Vagina (tissue), 2 donors: ENCODE measurements at regions of chr9 and their contacts with region 1.

Region 1: GRCh38 chr9:70413798-70414775 is at the start of gene KLF9:
- DNase-seq: peak; percentile 99 to 100
- H3K4me3 ChIP-seq: peak within 1 kb of the TSS; percentile 65 to 91
- H3K27ac ChIP-seq: peak within 1 kb of the TSS; percentile 100
- H3K4me1 ChIP-seq: peaks cover 57% of the 10 kb centered on the region
- H3K27me3 ChIP-seq: no peaks in the 10 kb centered on the region
- CTCF ChIP-seq: no peak
- POLR2A ChIP-seq: peak in 1 of 2 donors; percentile 95
- total RNA-seq, gene KLF9: 98.5 TPM

Region 2: DNA sequence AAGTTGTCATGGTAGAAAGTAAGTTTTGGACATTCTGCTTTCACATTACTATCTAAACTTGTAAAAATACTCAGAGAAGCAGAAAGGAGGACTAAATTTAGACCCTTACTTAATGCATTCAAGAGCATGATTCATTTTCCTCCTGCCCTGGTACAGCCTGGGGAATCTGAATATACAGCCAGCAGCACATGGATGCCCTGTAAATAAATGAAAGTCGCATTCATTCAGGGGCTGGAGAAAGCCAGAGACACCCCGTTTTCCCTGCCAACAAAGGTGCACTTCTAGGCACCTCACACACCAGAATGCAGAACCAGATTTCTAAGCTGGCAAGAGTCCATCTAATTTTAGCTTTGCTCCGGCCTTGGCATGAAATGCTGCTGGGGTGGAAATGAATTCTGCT is 173.1 kb after region 1 on chr9:
- intact Hi-C with region 1: loop called (anchors 5 kb)
- DNase-seq: peak in 1 of 2 donors; percentile 83
- H3K4me3 ChIP-seq: no peak overlapping the region
- H3K27ac ChIP-seq: peak overlapping the region; percentile 79
- H3K4me1 ChIP-seq: peaks cover 58% of the 10 kb centered on the region
- H3K27me3 ChIP-seq: no peaks in the 10 kb centered on the region
- CTCF ChIP-seq: no peak
- POLR2A ChIP-seq: no peak